Adrenal gland (tissue), 19 donors: ENCODE measurements at regions of chr3 and their contacts with region 1.

Region 1: DNA sequence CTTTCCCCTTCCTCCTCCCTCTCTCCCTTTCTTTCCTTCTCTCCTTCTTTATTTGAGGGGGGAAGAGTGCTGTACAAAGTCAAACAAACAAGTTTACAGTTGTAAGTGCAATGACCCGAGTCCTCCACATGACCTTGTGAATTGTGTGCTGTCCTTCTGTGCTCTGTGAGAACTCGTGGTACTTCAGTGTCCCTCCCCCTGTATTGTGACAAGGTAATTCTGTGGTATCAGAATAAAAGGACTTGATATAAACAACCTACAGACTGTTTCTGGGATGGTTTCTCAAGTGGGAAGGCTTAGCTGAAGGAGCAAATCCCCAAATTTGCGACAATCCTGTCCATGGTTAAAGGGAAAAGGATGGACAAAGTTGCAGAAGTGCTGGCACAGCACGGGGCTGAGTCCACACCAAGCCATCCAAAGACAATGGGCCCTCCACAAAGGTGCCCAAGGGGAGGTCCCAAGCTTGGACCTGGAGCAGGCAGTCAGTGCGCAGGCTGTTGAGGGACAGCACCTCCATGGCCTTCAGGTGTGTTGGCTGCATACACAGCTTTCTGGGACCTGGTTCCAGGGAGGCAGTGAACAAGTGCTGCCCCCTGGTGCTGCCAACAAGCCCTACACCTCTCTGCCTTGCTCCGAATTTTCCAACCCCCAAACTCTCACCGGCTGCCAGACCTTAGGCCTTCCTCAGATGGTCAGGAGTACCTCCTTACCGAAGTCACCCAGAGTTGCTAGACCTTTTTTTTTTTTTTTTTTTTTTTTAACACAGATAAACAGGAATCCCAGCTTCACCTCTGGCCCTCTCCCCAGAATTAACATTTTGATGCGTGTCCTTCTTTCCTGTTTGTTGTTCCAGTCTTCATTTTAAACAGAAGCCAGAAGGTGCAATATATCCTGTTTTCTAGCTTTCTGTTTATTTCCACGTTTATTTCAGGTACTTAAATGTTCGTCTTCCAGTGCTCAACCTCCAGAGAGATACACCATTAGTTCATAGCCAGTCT is 2.6 kb upstream of the APEH start:
- DNase-seq: peak; percentile 65 to 87 (median 75)
- H3K4me3 ChIP-seq: no peak overlapping the region
- H3K27ac ChIP-seq: no peak overlapping the region
- H3K4me1 ChIP-seq: peaks cover 10 to 17% of the 10 kb centered on the region in 2 donors
- H3K27me3 ChIP-seq: no peaks in the 10 kb centered on the region
- CTCF ChIP-seq: peak; percentile 68 to 92 (median 84)
- POLR2A ChIP-seq: no peak

Region 2: GRCh38 chr3:49534581-49535441 is 136.8 kb before region 1 on chr3:
- intact Hi-C with region 1: loop called (anchors 2 to 5 kb)
- DNase-seq: peak in 1 of 7 donors; percentile 87
- H3K4me3 ChIP-seq: no peak overlapping the region
- H3K27ac ChIP-seq: peak overlapping the region in 4 of 5 donors; percentile 1 to 84 (median 68)
- H3K4me1 ChIP-seq: peaks cover 21 to 24% of the 10 kb centered on the region in 2 donors
- H3K27me3 ChIP-seq: no peaks in the 10 kb centered on the region
- CTCF ChIP-seq: no peak
- POLR2A ChIP-seq: no peak

Region 3: DNA sequence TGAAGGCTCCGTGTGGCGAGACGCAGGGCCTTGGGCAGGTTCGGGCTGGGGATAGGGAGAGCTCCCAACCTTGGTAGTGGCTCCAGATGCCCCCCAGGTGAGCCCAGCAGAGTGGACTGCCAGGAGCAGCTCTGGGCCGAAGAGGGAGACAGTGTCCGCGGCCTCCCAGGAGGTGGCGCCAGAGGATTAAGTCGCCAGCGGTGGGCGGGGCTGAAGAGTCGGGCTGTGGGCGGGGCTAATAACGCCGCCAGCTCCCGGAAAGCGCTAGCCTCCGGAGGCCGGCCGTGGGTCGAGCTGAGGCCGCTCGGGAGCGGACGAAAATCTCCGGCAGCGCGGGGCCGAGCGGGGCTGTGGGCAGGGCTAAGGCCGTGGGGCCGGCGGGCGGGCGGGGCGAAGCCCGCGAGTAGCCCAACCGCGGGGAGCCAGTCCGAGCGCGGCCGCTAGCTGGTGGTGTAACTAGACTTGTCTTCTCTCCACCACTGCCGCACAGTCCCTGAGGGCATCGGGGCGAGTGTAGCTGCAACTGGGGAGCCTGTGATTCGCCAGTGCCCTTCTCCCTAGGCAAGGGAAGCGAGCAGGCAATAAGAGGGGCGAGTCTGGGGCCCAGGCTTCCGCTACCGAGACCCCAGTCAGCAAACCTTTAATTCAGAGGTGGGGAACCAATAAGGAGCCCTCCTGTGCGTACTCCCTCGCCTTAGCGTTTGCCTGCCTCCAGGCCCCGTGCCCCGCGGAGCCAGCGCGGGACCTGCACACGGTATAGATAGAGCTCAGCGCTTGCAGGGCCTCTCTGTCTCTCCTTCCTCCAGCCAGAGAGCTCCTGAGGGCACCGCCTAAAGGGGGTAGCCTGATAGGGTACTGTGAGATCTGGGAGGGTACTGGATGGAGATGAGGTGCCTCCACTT is 131.7 kb before region 1 on chr3:
- intact Hi-C with region 1: loop called in 1 of 2 experiments (anchors 2 kb)
- DNase-seq: peak; percentile 95 to 97 (median 96)
- H3K4me3 ChIP-seq: peak overlapping the region in 2 of 4 donors; percentile 38 to 46
- H3K27ac ChIP-seq: peak overlapping the region; percentile 70 to 91 (median 78)
- H3K4me1 ChIP-seq: peaks cover 19% of the 10 kb centered on the region in 2 donors
- H3K27me3 ChIP-seq: no peaks in the 10 kb centered on the region
- CTCF ChIP-seq: peak; percentile 73 to 95 (median 92)
- POLR2A ChIP-seq: peak; percentile 59 to 86